ENCODE measurements at regions of chr2 and their contacts with region 1.

Region 1: GRCh38 chr2:188598551-188598950 is 306.9 kb downstream of the GULP1 start:
- DNase-seq: no peak
- ATAC-seq: no peak
- H3K4me3 ChIP-seq: no peak overlapping the region
- H3K27ac ChIP-seq: no peak overlapping the region
- H3K4me1 ChIP-seq: peaks cover 13% of the 10 kb centered on the region
- H3K27me3 ChIP-seq: no peaks in the 10 kb centered on the region
- CTCF ChIP-seq: no peak

Region 2: DNA sequence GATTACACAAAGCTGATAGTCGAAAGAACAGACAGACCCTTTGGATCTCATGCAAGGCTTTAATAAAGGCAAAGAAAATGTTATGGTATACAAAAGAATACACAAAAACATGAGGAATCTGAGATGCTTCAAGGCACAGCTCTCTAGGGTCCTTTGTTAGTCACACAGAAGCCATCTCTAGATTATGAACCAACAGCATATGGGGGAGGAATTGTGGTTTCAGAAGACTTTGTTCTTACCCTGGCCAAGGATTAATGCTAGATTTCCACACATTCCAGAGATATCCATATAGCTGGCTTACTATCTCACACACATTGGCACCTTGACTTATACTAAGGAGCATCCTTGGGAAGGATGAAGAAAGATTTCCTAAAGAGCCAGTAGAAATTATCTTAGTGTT is 100.8 kb before region 1 on chr2:
- CTCF ChIA-PET with region 1: no interaction called
- POLR2A ChIA-PET with region 1: no interaction called
- intact Hi-C with region 1: no loop called
- DNase-seq: no peak
- ATAC-seq: no peak
- H3K4me3 ChIP-seq: no peak overlapping the region
- H3K27ac ChIP-seq: no peak overlapping the region
- H3K4me1 ChIP-seq: no peaks in the 10 kb centered on the region
- H3K27me3 ChIP-seq: no peaks in the 10 kb centered on the region
- CTCF ChIP-seq: no peak

Region 3: DNA sequence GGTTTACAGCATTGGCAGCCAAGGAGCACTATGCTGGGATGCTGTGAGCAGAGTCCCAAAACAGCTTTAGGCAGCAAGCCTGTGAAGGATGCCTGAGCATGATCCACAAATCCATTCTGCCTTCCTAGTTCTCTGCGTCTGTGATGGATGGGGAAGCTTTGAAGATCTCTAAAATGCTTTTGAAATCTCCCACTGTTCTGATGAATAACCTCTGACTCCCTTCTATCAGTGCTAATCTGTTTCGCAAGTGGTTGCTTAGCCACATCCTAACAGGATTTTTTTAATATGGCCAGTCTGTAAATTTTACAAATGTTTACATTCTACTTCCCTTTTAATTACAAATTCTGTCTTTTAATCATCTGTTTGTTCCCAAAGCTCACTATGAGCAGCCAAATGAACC is 12.3 kb after region 1 on chr2:
- CTCF ChIA-PET with region 1: no interaction called
- POLR2A ChIA-PET with region 1: no interaction called
- intact Hi-C with region 1: no loop called
- DNase-seq: no peak
- ATAC-seq: no peak
- H3K4me3 ChIP-seq: no peak overlapping the region
- H3K27ac ChIP-seq: no peak overlapping the region
- H3K4me1 ChIP-seq: no peaks in the 10 kb centered on the region; the same call in 1 of the 2 replicates
- H3K27me3 ChIP-seq: no peaks in the 10 kb centered on the region
- CTCF ChIP-seq: no peak

Region 4: GRCh38 chr2:188776634-188777033 is 178.1 kb after region 1 on chr2:
- CTCF ChIA-PET with region 1: no interaction called
- POLR2A ChIA-PET with region 1: no interaction called
- intact Hi-C with region 1: loop called (anchors 10 kb)
- DNase-seq: peak; percentile 85
- ATAC-seq: peak; percentile 74
- H3K4me3 ChIP-seq: no peak overlapping the region
- H3K27ac ChIP-seq: peak overlapping the region; percentile 7; the same call in 1 of the 2 replicates
- H3K4me1 ChIP-seq: peaks cover 26% of the 10 kb centered on the region
- H3K27me3 ChIP-seq: no peaks in the 10 kb centered on the region
- CTCF ChIP-seq: no peak